Psoas muscle (tissue), 8 donors: ENCODE measurements at regions of chr20 and their contacts with region 1.

Region 1: DNA sequence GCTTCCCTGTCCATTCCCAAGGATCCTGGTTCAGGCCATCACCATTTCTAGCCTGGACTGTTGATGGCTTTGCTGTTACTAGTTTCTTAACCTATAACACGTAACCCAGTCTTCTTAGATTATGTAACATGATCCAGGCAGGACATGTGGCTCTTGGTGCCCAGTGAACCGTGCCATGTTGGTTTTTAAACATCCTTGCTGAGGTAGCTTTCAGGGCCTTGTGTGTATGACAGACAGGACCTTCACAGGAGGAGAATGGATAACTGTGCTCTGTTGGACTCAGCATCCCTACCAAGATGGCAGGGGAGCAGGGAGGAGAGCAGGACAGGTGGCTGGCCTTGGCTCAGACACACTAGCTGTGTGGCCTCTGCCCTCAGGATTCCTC is 46.8 kb downstream of the PANK2 start:
- DNase-seq: no peak
- ATAC-seq: peak in 1 of 4 donors; percentile 6
- H3K4me3 ChIP-seq: no peak overlapping the region
- H3K27ac ChIP-seq: peak overlapping the region; percentile 56
- H3K4me1 ChIP-seq: peaks cover 40% of the 10 kb centered on the region
- H3K27me3 ChIP-seq: no peaks in the 10 kb centered on the region
- CTCF ChIP-seq: no peak

Region 2: GRCh38 chr20:3887876-3888620 is 47.9 kb before region 1 on chr20:
- intact Hi-C with region 1: no loop called
- DNase-seq: peak in 1 of 2 donors; percentile 27
- ATAC-seq: peak in 2 of 4 donors; percentile 13 to 22
- H3K4me3 ChIP-seq: peak overlapping the region; percentile 81
- H3K27ac ChIP-seq: peak overlapping the region; percentile 89
- H3K4me1 ChIP-seq: peaks cover 33% of the 10 kb centered on the region
- H3K27me3 ChIP-seq: no peaks in the 10 kb centered on the region
- CTCF ChIP-seq: no peak

Region 3: GRCh38 chr20:4014031-4014474 is 78.1 kb after region 1 on chr20:
- intact Hi-C with region 1: loop called in 1 of 2 experiments (anchors 2 kb)
- DNase-seq: no peak
- ATAC-seq: peak in 2 of 4 donors; percentile 36 to 51
- H3K4me3 ChIP-seq: peak overlapping the region; percentile 85
- H3K27ac ChIP-seq: no peak overlapping the region
- H3K4me1 ChIP-seq: peaks cover 5% of the 10 kb centered on the region
- H3K27me3 ChIP-seq: no peaks in the 10 kb centered on the region
- CTCF ChIP-seq: peak; percentile 50